ENCODE measurements at regions of chr7 and their contacts with region 1.

Region 1: DNA sequence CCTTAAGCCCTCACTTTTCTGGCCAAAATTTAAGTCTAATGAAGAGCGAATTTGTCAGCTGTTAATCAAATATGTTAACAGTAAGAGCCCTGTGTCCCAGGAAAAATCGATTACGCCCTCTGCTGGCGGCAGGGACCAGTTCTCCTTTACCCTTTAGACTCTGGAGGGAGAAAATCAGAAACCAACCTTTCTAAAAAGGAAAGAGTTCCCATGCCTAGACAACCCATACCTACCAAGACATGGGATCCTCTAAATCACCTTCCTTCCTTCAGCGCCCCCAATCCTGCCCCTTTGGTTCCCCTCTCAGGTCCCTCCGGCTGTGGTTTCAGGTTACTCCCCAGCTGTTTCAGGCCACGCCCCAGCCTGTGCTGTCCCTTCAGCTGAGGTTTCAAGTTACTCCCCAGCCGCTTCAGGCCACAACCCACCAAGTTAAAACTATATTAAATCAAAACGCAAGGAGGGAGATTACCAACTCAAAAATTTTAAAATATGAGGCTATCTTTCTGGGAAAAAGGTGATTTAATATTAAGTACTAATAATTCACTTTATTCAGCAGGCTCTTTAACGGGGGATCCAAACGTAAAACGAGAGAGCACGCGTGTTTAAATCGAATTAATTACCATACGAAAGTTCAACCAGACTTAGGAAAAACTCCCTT is 1.4 kb upstream of the AKR1B15 start:
- DNase-seq: peak; percentile 82
- ATAC-seq: peak; percentile 79
- H3K4me3 Mint-ChIP-seq: no peak overlapping the region
- H3K27ac Mint-ChIP-seq: no peak overlapping the region
- H3K4me1 Mint-ChIP-seq: peaks cover 4% of the 10 kb centered on the region
- H3K27me3 Mint-ChIP-seq: peaks cover 16% of the 10 kb centered on the region

Region 2: DNA sequence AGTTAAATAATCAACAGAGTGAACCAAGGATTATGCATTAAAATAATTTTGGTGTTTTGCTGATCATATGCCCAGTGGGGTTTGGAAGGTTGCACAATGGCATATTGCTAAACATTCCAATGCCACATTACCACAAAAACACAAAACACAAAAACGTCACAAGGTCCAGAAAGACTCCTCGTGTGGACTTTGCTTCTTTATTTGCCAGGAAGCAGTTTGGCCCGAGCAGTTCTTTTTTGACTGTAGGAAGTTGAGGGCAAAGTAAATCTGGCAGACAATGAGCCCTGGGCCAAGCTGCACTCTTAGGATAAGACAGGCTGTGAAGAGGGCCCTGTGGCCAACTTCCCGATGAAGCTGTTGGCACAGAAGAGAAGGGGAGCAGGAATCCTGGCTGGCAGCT is 191.6 kb before region 1 on chr7:
- CTCF ChIA-PET with region 1: no interaction called
- POLR2A ChIA-PET with region 1: no interaction called
- intact Hi-C with region 1: no loop called
- DNase-seq: no peak
- ATAC-seq: no peak
- H3K4me3 Mint-ChIP-seq: no peak overlapping the region
- H3K27ac Mint-ChIP-seq: no peak overlapping the region
- H3K4me1 Mint-ChIP-seq: peaks cover 10% of the 10 kb centered on the region
- H3K27me3 Mint-ChIP-seq: peaks cover 6% of the 10 kb centered on the region

Region 3: DNA sequence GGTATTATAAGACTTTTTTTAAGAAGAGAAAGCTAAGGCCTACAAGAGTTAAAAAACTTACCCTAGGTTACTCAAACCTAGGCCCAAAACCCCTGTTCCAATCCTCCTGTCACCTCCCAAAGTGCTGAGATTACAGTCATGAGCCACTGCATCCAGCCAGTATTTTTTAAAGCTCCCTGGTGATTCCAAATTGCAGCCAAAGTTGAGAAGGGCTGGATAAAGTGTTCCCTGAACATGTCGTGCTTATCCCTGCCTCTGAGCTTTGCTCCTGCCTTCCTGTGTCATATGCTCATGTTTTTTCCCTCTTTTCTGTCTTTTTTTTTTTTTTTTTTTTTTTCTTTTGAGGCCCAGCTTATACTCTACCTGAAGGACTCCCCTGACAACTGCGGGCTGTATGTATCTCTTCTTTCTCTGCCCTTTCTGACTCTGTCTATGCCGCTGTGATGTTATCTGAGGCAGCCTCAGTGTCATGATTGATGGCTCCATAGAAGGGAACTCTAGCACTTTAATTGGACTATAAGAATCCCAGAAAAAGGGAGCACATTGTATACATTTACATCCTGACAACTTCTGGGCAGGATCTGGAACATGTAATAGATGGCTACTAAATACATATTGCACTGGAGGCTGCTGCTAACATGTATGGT is 12.1 kb before region 1 on chr7:
- CTCF ChIA-PET with region 1: interaction called, 11 read pairs
- POLR2A ChIA-PET with region 1: no interaction called
- intact Hi-C with region 1: no loop called
- DNase-seq: no peak
- ATAC-seq: no peak
- H3K4me3 Mint-ChIP-seq: no peak overlapping the region
- H3K27ac Mint-ChIP-seq: no peak overlapping the region
- H3K4me1 Mint-ChIP-seq: no peaks in the 10 kb centered on the region
- H3K27me3 Mint-ChIP-seq: peaks cover 6% of the 10 kb centered on the region

Region 4: GRCh38 chr7:134593530-134594392 is 46.2 kb after region 1 on chr7:
- CTCF ChIA-PET with region 1: interaction called, 10 read pairs
- POLR2A ChIA-PET with region 1: no interaction called
- intact Hi-C with region 1: no loop called
- DNase-seq: no peak
- ATAC-seq: no peak
- H3K4me3 Mint-ChIP-seq: no peak overlapping the region
- H3K27ac Mint-ChIP-seq: no peak overlapping the region
- H3K4me1 Mint-ChIP-seq: no peaks in the 10 kb centered on the region
- H3K27me3 Mint-ChIP-seq: peaks cover 4% of the 10 kb centered on the region

Measured in activated CD4-positive, alpha-beta T cell treated with anti-CD3 and anti-CD28 coated beads for 36 hours (primary cell).